Activated CD4-positive, alpha-beta T cell treated with anti-CD3 and anti-CD28 coated beads for 36 hours (primary cell): ENCODE measurements at regions of chr3 and their contacts with region 1.

Region 1: DNA sequence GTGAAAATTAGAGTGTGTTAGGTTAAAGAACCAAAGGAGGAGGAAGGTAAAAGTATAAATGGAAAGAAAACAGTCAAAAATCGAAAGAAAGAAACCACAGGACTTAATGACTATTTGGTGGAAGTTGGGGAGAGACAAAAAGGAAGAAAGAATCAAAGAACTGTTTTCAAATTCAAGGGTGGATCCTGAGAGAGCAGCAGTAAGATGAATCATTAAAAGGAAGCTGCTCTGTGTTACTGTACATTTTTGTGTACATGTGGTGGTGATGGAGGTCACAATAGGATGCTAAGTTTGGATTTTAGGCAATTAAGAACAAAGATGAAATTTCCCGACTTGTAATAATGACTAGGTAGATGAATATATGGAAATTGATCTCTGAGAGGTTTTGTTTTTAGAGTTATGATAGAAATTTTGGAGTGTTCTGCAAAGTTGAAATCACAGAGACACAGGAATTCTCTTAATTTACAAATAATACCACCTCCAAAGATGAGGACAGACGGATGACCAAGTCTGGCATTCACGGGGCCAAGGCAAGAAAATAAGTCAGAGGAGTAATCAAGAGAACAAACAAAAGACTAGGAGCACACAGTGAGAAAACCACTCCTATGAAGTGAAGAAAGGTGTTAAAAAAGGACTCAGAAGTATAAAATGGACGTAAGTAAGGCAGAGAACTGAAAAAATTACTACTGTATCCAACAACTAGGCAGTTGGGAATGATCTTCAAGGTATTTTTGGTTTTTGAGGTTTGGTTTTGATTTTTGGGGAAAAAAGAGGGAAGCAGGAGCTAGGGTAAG is 7.1 kb downstream of the DHX36 start:
- DNase-seq: no peak
- ATAC-seq: peak; percentile 64
- H3K4me3 Mint-ChIP-seq: no peak overlapping the region
- H3K27ac Mint-ChIP-seq: peak overlapping the region; percentile 72
- H3K4me1 Mint-ChIP-seq: peaks cover 33% of the 10 kb centered on the region
- H3K27me3 Mint-ChIP-seq: no peaks in the 10 kb centered on the region

Region 2: DNA sequence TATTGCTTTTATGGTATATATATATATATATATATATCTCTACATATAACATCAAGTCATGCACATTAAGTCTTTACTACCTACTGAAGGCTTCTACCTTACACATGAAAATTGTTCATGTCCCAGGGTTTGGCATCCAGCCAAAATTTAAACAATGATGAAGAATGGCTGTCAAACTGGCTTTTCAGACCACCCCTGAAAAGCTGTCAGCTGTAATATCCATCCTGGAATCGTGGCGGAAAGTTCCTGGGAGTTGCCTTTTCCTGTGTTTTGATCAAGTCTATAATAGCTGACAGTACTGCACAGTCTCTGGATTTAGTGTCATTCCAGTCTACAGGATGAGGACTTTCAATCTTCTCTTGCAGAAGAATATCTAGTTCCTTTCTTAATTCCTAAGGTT is 41.2 kb before region 1 on chr3:
- CTCF ChIA-PET with region 1: no interaction called
- POLR2A ChIA-PET with region 1: no interaction called
- intact Hi-C with region 1: loop called in 1 of 2 experiments (anchors 5 kb)
- DNase-seq: no peak
- ATAC-seq: no peak
- H3K4me3 Mint-ChIP-seq: no peak overlapping the region
- H3K27ac Mint-ChIP-seq: no peak overlapping the region
- H3K4me1 Mint-ChIP-seq: no peaks in the 10 kb centered on the region
- H3K27me3 Mint-ChIP-seq: no peaks in the 10 kb centered on the region

Region 3: DNA sequence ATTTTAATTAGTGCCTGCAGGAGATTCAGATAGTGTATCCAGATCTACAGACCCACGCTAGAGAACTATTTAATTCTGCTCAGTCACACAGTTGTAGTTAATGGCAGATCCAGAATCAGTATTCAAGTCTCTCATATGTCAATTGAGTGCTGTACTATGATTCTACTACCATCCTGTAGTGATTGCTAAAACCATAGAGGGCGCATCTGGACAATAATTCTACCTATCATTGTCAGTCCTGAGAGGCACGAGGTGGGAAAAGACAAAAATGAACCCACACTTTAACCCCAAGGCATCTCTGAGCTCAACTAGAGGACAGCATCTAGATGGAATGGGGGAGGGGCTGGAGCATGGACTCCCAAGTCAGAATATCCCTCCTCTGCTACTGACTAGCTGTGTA is 15.6 kb before region 1 on chr3:
- CTCF ChIA-PET with region 1: interaction called, 11 read pairs
- POLR2A ChIA-PET with region 1: no interaction called
- intact Hi-C with region 1: no loop called
- DNase-seq: no peak
- ATAC-seq: no peak
- H3K4me3 Mint-ChIP-seq: no peak overlapping the region
- H3K27ac Mint-ChIP-seq: no peak overlapping the region
- H3K4me1 Mint-ChIP-seq: no peaks in the 10 kb centered on the region
- H3K27me3 Mint-ChIP-seq: no peaks in the 10 kb centered on the region